CD14-positive monocyte (primary cell): ENCODE measurements at regions of chr1 and their contacts with region 1.

Region 1: DNA sequence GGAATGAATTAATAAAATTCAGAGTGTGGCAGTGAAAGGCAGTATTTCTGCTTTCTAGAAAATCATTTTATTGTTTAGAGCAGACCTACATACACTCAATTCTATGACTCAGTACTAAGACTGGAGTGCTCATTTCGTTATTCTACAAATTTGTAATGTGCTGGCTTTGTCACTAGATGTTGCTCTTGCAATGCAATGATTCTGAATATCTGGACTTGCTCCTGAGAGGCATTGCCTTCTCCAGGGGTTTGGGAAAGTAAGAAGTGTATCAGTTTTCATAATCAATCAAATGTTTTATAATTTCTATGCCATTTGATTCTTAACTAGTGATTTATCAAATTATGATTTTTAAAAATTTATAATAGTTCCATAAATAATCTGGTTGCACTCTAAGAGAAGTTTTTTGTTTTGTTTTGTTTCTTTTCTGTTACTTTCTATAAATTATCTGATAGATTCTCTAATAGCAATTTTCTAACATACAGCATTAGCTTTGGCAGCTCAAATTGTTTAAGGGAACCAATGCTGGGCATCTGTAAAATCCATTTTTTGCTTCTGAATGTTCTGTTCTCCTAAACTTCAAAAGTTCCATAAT is 280.5 kb upstream of the SGIP1 start:
- DNase-seq: peak; percentile 57 to 80 (median 80)
- H3K4me3 ChIP-seq: no peak overlapping the region
- H3K4me3 Mint-ChIP-seq: no peak overlapping the region
- H3K27ac ChIP-seq: no peak overlapping the region
- H3K27ac Mint-ChIP-seq: peak overlapping the region in 3 of 7 donors; percentile 5 to 63 (median 27)
- H3K4me1 ChIP-seq: peaks cover 16 to 27% of the 10 kb centered on the region in 2 donors
- H3K4me1 Mint-ChIP-seq: peaks cover 26% of the 10 kb centered on the region
- H3K27me3 ChIP-seq: no peaks in the 10 kb centered on the region
- H3K27me3 Mint-ChIP-seq: no peaks in the 10 kb centered on the region
- CTCF ChIP-seq: peak; percentile 83

Region 2: DNA sequence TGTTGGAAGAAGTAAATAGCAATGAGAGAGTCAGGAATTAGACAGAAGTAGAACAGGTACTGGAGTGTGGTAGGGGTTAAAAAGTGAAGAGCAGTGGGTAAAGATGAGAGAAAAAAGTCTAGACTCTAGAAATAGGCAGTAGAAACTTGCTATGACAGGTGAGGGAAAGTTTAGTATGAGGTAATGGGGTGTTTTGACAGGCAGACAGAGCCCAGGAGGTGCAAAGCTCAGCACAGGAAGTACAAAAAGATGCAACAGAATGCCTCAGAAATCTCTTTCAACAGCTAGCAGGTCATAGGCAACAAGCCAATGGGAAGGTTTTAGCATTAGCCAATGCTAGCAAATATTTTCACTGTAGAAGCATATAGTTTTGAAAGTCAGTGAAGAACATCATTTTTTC is 38.5 kb before region 1 on chr1:
- intact Hi-C with region 1: no loop called
- DNase-seq: no peak
- H3K4me3 ChIP-seq: no peak overlapping the region
- H3K4me3 Mint-ChIP-seq: no peak overlapping the region
- H3K27ac ChIP-seq: no peak overlapping the region
- H3K27ac Mint-ChIP-seq: no peak overlapping the region
- H3K4me1 ChIP-seq: no peaks in the 10 kb centered on the region
- H3K4me1 Mint-ChIP-seq: no peaks in the 10 kb centered on the region
- H3K27me3 ChIP-seq: no peaks in the 10 kb centered on the region
- H3K27me3 Mint-ChIP-seq: no peaks in the 10 kb centered on the region
- CTCF ChIP-seq: no peak

Region 3: DNA sequence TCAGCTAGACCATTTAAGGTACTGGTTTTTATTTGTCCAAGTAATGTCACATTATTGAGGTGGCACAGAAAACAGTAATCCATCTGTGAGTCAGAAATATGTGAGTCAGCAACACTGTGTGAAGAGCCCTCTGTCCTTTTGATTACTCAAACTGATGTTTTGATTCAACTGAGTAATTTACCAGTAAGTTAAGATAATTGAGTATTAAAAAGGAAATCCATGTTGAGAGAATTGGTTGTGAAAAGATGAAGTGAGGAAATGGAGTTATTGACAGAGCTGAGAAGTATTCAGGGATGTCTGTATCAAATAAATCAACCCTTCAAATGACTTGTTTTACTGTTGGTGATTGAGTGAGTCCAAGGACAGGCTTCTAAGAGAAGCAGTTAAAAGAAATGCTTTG is 22.2 kb before region 1 on chr1:
- intact Hi-C with region 1: no loop called
- DNase-seq: peak in 1 of 3 donors; percentile 41
- H3K4me3 ChIP-seq: no peak overlapping the region
- H3K4me3 Mint-ChIP-seq: no peak overlapping the region
- H3K27ac ChIP-seq: no peak overlapping the region
- H3K27ac Mint-ChIP-seq: no peak overlapping the region
- H3K4me1 ChIP-seq: no peaks in the 10 kb centered on the region
- H3K4me1 Mint-ChIP-seq: peaks cover 4% of the 10 kb centered on the region
- H3K27me3 ChIP-seq: no peaks in the 10 kb centered on the region
- H3K27me3 Mint-ChIP-seq: peaks cover 1 to 5% (median 2%) of the 10 kb centered on the region in 3 donors
- CTCF ChIP-seq: no peak

Region 4: GRCh38 chr1:66374561-66375111 is 121.2 kb after region 1 on chr1:
- intact Hi-C with region 1: loop called in 1 of 2 experiments (anchors 10 kb)
- DNase-seq: peak; percentile 75 to 93 (median 76)
- H3K4me3 ChIP-seq: peak overlapping the region in 1 of 3 experiments; percentile 58
- H3K4me3 Mint-ChIP-seq: peak overlapping the region in 1 of 2 donors; percentile 65
- H3K27ac ChIP-seq: peak overlapping the region in 1 of 2 donors; percentile 81
- H3K27ac Mint-ChIP-seq: peak overlapping the region; percentile 84 to 96 (median 93)
- H3K4me1 ChIP-seq: peaks cover 69 to 84% of the 10 kb centered on the region in 2 donors
- H3K4me1 Mint-ChIP-seq: peaks cover 76% of the 10 kb centered on the region
- H3K27me3 ChIP-seq: no peaks in the 10 kb centered on the region
- H3K27me3 Mint-ChIP-seq: peaks cover 0 to 1% (median 0%) of the 10 kb centered on the region in 3 donors
- CTCF ChIP-seq: no peak